Right ventricle myocardium superior (tissue), 1 donor: ENCODE measurements at regions of chr4 and their contacts with region 1.

Region 1: GRCh38 chr4:184745831-184746795 is 12.2 kb upstream of the CENPU start:
- DNase-seq: peak; percentile 74
- ATAC-seq: peak; percentile 82

Region 2: GRCh38 chr4:184825896-184826690 is 80.0 kb after region 1 on chr4 and contains the start of gene ACSL1:
- intact Hi-C with region 1: loop called (anchors 5 kb)
- DNase-seq: peak; percentile 93
- ATAC-seq: peak; percentile 91
- total RNA-seq, gene ACSL1: 495 TPM

Region 3: DNA sequence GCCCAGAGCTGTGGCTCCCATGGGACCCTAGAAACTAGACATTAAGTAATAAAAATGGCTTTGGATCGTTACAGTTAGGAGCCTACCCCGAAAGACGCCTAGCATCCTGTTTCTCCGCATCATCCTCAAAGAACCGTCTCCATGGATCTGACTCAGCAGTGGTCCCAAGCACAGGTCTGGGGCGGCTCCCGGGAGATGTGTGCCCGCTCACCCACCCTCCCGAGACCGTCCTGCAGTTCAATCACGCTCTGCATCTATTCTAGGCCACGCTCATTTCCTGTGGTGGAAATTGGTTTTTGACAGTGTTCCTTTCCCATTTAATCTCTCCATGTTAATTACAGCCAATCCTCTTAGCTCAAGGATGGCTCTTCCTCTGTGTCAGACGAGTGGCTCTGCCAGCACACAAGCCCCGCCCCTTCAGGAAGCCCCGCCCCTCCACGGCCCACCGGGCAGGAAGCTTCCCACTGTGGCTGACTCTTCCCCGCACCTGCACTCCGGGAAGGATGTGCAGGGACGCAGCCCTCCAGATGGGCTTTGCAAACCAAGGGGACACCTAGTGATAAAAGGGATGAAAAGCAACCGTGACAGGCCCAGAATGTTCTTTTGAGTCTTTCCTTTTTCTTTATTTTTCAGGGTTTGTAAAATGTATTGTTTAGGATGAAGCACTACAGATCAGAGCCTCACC is 237.7 kb after region 1 on chr4:
- intact Hi-C with region 1: loop called (anchors 5 kb)
- DNase-seq: peak; percentile 79
- ATAC-seq: peak; percentile 76